Breast epithelium (tissue), 4 donors: ENCODE measurements at regions of chr11 and their contacts with region 1.

Region 1: GRCh38 chr11:57196596-57196995 is 14.8 kb downstream of the LRRC55 start:
- DNase-seq: no peak
- H3K4me3 ChIP-seq: no peak overlapping the region
- H3K27ac ChIP-seq: no peak overlapping the region
- H3K4me1 ChIP-seq: no peaks in the 10 kb centered on the region
- H3K27me3 ChIP-seq: peaks cover 0 to 4% of the 10 kb centered on the region in 2 donors
- CTCF ChIP-seq: no peak
- POLR2A ChIP-seq: no peak

Region 2: DNA sequence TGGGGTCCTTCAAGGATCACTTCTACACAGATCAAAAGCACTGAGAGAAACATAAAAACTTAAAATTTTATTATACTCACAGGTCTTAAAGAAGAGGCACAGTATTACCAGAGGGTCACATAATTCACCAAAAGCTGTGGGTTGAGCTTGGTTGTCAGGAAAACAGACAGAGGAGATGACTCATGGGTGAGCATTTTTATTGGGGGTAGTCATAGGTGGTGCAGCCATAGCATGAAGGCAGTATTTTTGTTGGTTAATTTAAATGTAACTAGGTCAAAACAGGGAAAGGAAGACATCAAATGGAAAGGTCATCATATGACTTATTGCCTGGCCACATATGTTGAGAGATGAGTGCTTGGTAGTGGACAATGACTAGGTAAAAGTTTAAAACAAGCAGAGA is 1138.1 kb after region 1 on chr11:
- intact Hi-C with region 1: loop called (anchors 10 kb)
- DNase-seq: no peak
- H3K4me3 ChIP-seq: no peak overlapping the region
- H3K27ac ChIP-seq: no peak overlapping the region
- H3K4me1 ChIP-seq: no peaks in the 10 kb centered on the region
- H3K27me3 ChIP-seq: no peaks in the 10 kb centered on the region
- CTCF ChIP-seq: no peak
- POLR2A ChIP-seq: no peak